Activated naive CD4-positive, alpha-beta T cell treated with anti-CD3 and anti-CD28 coated beads for 36 hours (primary cell): ENCODE measurements at regions of chr9 and their contacts with region 1.

Region 1: GRCh38 chr9:96317335-96317980 is 15.5 kb upstream of the HSD17B3 start:
- DNase-seq: peak; percentile 72
- H3K4me3 Mint-ChIP-seq: no peak overlapping the region
- H3K27ac Mint-ChIP-seq: no peak overlapping the region
- H3K4me1 Mint-ChIP-seq: no peaks in the 10 kb centered on the region
- H3K27me3 Mint-ChIP-seq: peaks cover under 1% of the 10 kb centered on the region

Region 2: GRCh38 chr9:96232539-96233241 is 84.8 kb before region 1 on chr9:
- CTCF ChIA-PET with region 1: interaction called, 70 read pairs
- intact Hi-C with region 1: loop called (anchors 1 kb)
- DNase-seq: peak; percentile 57
- H3K4me3 Mint-ChIP-seq: no peak overlapping the region
- H3K27ac Mint-ChIP-seq: no peak overlapping the region
- H3K4me1 Mint-ChIP-seq: peaks cover 2% of the 10 kb centered on the region
- H3K27me3 Mint-ChIP-seq: peaks cover 25% of the 10 kb centered on the region

Region 3: GRCh38 chr9:96241391-96241809 is 76.1 kb before region 1 on chr9:
- CTCF ChIA-PET with region 1: interaction called, 70 read pairs
- intact Hi-C with region 1: no loop called
- DNase-seq: peak; percentile 83
- H3K4me3 Mint-ChIP-seq: no peak overlapping the region
- H3K27ac Mint-ChIP-seq: no peak overlapping the region
- H3K4me1 Mint-ChIP-seq: peaks cover 13% of the 10 kb centered on the region
- H3K27me3 Mint-ChIP-seq: peaks cover 23% of the 10 kb centered on the region

Region 4: GRCh38 chr9:96327694-96328352 is 10.4 kb after region 1 on chr9:
- CTCF ChIA-PET with region 1: interaction called, 29 read pairs
- intact Hi-C with region 1: no loop called
- DNase-seq: peak; percentile 70
- H3K4me3 Mint-ChIP-seq: no peak overlapping the region
- H3K27ac Mint-ChIP-seq: no peak overlapping the region
- H3K4me1 Mint-ChIP-seq: no peaks in the 10 kb centered on the region
- H3K27me3 Mint-ChIP-seq: no peaks in the 10 kb centered on the region